Posterior vena cava (tissue), 2 donors: ENCODE measurements at regions of chr9 and their contacts with region 1.

Region 1: DNA sequence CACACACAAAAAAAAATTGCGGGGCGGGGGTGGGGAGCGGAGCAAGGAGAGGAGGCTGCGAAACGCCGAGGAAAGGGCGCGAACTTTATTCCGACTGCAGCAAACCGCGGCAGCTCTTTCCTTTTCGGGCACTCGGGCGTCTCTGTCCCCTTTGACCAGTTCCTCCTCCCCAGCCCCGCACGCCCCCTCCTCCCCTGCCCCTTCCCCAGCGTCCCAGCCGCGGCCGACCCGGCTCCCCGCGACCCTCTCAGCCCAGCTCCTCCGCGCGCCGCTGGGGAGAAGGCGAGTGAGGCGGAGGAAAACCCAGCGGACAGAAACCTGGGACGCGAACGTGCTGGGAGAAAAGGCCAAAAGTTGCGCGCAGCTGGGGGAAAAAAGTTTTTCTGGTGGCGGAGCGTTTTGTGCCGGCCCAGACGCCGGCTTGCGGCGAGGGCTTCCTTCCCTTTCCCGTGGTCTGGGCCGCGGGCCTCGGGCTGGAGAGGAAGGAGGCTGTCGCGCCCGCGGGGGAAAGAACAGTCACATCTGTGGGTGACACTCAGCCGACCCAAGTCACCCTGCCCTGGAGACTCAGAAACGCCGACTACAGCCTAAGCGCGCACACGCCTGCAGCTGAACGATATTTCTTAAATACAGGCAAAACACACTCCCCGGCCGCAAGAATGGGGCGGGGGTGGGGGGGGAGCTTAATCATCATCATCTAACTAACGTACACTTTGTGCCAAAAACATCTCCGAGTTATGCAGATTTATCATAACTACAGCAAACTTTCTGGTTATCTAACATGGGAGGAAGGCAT is 1.1 kb upstream of the BNC2 start:
- DNase-seq: peak; percentile 92

Region 2: DNA sequence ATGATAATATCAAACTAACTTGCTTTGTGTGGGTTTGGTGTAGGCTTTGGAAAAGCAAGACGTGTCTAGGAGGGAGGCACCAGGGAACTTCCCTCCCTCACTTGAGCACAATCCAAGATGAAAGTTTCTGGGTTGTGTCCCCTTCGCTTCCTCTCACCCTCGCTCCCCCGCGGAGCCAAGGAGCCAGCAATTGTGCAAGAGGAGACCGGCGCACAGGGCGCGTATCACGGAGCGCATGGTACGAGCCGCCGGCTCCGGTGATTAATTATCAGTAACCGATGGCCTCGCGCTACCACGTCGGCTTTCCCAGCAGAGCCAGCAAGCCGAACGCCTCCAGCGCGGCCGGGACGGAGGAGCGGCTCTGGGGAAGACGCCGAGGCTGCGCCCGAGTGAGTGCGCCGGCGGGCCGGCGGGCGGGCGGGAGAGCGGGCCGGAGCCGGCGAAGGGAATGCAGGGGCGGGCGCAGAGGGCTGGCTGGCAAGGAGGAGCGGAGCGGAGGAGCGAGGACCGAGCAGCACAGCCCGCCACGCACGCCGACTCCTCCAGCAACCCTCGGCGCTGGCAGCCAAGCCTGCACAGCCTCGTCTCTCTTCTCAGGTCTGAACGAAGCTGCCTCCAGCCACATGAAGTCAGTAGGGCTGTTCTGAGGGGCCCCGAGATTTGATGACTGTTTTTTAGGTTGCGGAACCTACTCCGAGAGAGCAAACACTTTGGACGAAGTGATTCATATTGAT is 144.7 kb before region 1 on chr9:
- intact Hi-C with region 1: loop called in 1 of 2 experiments (anchors 10 kb)
- DNase-seq: peak; percentile 96

Region 3: DNA sequence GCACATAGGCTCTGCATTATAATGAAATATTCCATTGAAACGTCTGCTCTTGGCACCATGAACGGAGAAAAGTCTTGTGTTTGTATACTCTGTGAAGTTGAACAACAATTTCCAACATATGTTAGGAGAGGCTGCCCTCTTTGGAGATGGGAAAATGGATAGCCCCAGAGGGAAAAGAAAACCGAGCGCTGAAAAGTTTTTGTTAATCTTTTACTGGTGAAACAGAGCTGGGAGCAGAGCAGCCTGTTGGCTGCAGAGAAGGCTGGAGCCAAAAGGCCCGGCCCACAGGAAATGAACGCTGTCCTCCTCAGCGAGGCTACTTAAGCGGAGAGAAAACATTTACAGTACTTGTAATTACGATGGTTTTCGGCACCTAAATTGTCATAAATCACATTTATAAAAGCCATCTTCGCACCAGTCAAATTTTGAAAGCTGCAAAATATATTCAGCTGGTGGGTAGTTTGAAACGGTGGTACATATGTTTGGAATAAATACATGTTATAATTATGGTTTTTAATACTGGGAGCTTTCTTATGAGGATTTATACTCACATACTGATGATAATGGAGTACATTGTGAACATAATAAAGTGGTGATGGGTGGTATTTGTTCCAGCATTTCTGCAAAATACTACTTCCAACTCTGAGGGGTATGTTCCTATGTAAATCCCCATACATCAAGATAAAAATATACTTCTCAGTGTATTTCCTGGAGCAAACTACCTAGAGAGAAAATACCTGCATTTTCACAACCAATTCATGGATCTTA is 133.7 kb after region 1 on chr9:
- intact Hi-C with region 1: loop called in 1 of 2 experiments (anchors 10 kb)
- DNase-seq: no peak